ENCODE measurements at regions of chr18 and their contacts with region 1.

Region 1: DNA sequence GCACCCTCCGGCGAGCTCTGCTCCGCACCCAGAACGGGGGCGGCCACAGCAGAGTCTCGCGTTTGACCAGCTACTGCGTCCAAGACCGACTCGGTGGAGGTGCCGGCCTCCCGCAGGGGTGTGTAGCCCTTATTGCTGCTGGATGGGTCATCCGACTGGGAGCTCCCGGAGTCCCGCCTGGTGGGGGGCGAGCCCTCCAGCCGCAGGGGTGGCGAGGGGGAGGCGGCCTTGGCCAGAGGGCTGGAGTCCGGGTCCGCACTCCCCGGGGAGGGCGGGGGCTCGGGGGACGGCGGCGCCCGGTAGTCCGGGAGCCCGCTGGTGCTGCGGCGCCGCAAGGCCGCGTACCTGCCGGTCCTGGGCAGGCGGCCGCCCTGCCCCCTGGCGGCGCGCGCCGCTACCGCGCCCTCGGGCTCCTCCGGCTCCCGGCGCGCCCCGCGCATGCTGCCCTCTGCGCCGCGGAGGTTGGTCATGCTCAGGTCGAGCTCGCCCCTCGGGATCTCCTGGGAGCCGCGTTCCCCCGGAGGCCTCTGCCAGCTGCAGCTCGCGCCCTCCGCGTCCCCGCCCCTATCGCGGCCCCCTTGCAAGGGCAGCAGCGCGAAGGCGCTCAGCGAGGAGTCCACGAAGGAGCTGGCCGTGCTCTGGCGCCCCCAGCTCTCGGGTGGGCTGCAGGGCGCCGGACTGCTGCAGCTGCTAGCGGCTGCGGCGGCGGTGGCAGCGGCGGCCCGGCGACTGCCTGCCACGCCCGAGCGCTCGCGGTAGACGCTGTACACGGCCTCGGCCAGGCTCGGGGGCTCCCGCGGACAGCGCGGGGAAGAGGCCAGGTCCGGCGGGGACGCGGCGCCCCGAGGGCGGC is 4.8 kb downstream of the TMEM200C start:
- DNase-seq: peak; percentile 27 to 68 (median 40)
- ATAC-seq: peak; percentile 37 to 97 (median 80)
- H3K4me3 ChIP-seq: peak overlapping the region; percentile 32 to 70 (median 54)
- H3K27ac ChIP-seq: peak overlapping the region in 3 of 12 donors; percentile 19 to 71 (median 62)
- H3K4me1 ChIP-seq: peaks cover 0 to 31% (median 5%) of the 10 kb centered on the region in 12 donors
- H3K27me3 ChIP-seq: peaks cover 21 to 79% (median 42%) of the 10 kb centered on the region in 9 donors
- CTCF ChIP-seq: peak; percentile 19 to 90 (median 60)
- POLR2A ChIP-seq: no peak

Region 2: DNA sequence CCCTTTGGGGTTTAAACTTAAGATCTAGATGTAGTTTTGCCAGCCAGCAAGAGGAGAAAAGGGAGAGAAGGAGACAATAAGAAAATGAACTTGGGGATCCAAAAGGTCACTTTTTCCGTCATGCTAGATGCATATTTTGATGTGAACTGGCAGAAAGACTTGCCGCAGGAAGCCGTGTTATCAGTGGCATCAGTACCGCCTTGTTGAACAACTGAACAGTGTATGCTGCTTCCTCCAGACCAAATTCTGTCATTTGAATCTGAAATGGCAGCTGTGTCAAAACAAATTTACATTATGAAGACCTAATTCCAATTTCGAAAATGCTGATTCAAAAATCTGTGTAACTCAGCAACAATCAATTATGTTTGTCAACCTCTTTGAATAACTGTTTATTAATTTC is 37.3 kb before region 1 on chr18:
- intact Hi-C with region 1: no loop called
- DNase-seq: no peak
- ATAC-seq: no peak
- H3K4me3 ChIP-seq: no peak overlapping the region
- H3K27ac ChIP-seq: no peak overlapping the region
- H3K4me1 ChIP-seq: no peaks in the 10 kb centered on the region
- H3K27me3 ChIP-seq: peaks cover 0 to 49% (median 9%) of the 10 kb centered on the region in 9 donors
- CTCF ChIP-seq: no peak
- POLR2A ChIP-seq: no peak

Region 3: GRCh38 chr18:5969989-5970403 is 79.4 kb after region 1 on chr18:
- intact Hi-C with region 1: loop called in 1 of 10 experiments (anchors 10 kb)
- DNase-seq: no peak
- ATAC-seq: no peak
- H3K4me3 ChIP-seq: no peak overlapping the region
- H3K27ac ChIP-seq: no peak overlapping the region
- H3K4me1 ChIP-seq: peaks cover 0 to 6% (median 0%) of the 10 kb centered on the region in 12 donors
- H3K27me3 ChIP-seq: peaks cover 0 to 2% (median 0%) of the 10 kb centered on the region in 9 donors
- CTCF ChIP-seq: no peak
- POLR2A ChIP-seq: no peak

Region 4: DNA sequence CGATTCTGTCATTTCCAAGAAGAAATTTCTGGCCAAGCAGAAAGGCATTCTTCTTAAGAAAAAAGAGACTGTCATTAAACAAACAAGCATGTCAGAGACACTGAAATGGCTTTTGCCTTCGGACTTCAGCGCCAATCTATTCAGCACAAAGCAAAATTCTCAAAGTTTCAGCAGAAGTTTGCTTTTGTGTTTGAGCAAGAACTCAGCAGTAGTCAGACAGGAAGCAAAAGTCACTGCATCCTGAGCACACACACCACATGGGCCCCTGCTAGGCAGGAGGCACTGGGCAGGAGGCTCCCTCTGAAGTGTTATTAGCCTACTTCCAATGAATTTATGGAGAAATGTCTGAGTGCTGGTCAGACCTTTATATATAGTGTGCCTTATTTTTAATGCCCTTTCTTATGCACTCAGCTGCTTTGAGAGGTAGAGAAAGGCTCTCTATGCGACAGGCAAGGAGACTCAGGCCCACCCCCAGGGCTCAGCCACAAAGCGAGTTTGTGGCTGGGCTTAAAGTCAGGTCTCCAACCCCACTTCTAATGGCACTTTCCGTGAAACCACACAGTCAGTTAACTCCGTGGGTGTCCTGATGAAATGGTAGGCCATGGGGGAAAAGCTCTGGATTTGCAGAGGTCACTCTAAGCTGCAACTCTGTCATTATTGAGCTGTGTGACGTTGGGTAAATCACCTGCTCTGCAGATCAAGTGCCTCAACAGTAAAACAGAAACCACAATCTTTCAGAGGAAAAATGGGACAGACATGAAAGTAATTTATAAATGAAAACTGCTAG is 165.8 kb after region 1 on chr18:
- intact Hi-C with region 1: loop called in 1 of 10 experiments (anchors 10 kb)
- DNase-seq: no peak
- ATAC-seq: peak in 1 of 4 donors; percentile 20
- H3K4me3 ChIP-seq: no peak overlapping the region
- H3K27ac ChIP-seq: peak overlapping the region in 8 of 12 donors; percentile 19 to 67 (median 36)
- H3K4me1 ChIP-seq: peaks cover 0 to 43% (median 10%) of the 10 kb centered on the region in 12 donors
- H3K27me3 ChIP-seq: no peaks in the 10 kb centered on the region
- CTCF ChIP-seq: no peak
- POLR2A ChIP-seq: no peak

Region 5: DNA sequence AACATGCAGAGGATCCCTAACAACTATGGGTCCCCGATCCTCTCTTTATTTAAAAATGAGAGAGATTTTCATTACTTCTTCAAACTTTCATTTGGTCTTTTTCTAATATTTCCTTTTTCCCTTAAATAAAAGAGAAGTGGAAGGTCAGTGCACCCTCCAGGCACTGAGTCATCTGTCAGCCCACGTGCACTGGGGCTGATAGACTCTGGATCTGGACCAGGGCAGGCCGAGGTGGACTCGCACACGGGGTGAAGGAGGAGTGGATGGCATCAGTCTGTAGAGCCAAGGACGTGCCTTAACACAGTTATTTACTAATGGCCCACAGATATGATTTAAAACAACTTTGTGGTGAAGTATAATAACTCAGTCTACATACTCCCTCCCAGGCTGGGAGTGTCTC is 219.2 kb after region 1 on chr18:
- intact Hi-C with region 1: loop called in 1 of 10 experiments (anchors 10 kb)
- DNase-seq: no peak
- ATAC-seq: peak in 3 of 4 donors; percentile 66 to 80 (median 79)
- H3K4me3 ChIP-seq: no peak overlapping the region
- H3K27ac ChIP-seq: no peak overlapping the region
- H3K4me1 ChIP-seq: peaks cover 0 to 4% (median 0%) of the 10 kb centered on the region in 12 donors
- H3K27me3 ChIP-seq: no peaks in the 10 kb centered on the region
- CTCF ChIP-seq: no peak
- POLR2A ChIP-seq: no peak

Region 6: DNA sequence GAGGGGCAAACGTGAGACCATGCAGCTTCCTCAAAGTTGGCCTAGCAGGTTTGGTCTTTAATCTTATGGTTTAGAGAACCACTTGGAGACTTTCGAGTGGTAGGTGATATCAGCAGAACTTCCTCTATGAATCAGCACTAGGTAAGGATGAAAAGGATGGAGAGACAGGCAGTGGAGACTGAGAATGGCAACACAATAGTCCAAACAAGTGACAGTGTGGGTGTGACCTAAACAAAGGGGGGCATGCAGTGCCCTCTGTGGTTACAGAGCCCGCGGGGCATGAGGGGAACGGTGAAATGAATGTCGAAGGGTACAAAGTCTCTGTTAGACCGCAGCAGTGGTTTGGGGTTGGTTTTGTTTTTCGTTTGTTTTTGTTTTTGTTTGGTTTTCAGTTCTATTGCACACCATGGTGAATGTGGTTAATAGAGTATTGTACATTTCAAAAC is 380.2 kb after region 1 on chr18:
- intact Hi-C with region 1: no loop called
- DNase-seq: no peak
- ATAC-seq: no peak
- H3K4me3 ChIP-seq: no peak overlapping the region
- H3K27ac ChIP-seq: no peak overlapping the region
- H3K4me1 ChIP-seq: no peaks in the 10 kb centered on the region
- H3K27me3 ChIP-seq: peaks cover 0 to 6% (median 0%) of the 10 kb centered on the region in 9 donors
- CTCF ChIP-seq: no peak
- POLR2A ChIP-seq: no peak

Region 7: DNA sequence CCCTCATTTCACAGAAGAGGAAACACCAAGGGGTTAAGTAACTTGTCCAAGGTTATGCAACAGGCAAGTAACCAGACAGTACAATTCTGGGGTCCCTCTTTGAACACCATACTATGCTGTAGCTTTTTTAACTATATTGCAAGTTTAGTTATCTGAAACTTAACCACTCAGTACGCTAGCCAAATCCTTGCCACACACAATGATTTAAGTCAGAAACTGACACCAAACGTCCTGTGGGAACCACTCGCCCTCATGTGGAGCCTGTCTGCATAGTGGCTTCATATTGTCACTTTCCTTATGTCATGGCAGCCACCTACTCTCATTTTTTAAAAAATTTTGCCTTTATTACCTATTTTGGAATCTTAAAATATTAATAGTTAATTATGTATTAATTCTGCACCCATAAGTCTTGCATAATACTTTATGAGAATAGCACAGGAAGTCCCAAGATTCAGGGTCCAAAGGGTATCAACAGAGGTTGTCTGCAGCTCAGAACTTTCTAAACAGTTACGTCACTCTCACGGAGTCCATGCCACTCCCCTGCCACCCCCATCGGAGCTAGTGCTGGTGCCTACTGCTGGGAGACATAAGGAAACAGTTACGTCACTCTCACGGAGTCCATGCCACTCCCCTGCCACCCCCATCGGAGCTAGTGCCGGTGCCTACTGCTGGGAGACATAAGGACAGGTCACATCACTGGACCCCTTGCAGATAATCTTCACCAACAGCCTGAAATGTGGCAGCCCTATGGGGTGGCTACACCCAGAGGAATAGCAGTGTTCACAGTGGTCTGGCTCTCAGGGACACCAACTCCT is 425.2 kb after region 1 on chr18:
- intact Hi-C with region 1: loop called in 2 of 10 experiments (anchors 10 kb)
- DNase-seq: no peak
- ATAC-seq: peak in 1 of 4 donors; percentile 29
- H3K4me3 ChIP-seq: peak overlapping the region in 1 of 12 donors; percentile 13
- H3K27ac ChIP-seq: no peak overlapping the region
- H3K4me1 ChIP-seq: peaks cover 0 to 2% (median 0%) of the 10 kb centered on the region in 12 donors
- H3K27me3 ChIP-seq: no peaks in the 10 kb centered on the region
- CTCF ChIP-seq: peak in 2 of 12 donors; percentile 13 to 37
- POLR2A ChIP-seq: no peak

Region 8: DNA sequence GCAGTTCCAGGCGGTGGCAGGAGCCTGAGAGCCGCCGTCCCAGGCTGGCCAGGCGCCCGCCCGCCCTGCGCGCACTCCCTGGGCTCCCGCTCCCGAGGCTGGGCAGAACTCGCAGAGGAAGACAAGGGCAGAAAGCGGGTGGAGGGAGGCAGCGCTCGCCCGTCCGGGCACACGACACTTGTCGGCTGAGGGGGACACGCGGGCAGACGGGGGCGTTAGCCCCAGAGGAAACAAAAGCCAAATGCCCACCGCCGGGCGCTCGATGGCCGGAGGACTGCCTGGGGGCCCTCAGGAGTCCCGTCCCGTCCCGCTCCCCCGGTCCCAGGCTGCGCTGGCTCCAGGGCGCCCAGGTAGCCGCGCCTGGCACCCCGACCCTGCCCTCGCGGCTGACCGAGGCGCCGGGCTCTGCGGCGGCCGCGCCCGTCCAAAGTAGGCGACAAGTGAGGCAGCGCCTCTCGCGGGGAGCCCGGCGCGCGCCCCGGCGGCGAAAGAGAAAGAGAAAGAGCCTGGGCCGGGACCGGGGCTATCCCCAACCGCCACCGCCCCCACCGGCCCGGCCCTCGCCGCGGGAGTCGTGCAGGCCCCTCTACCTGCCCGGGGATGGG is 523.7 kb after region 1 on chr18:
- intact Hi-C with region 1: loop called in 1 of 10 experiments (anchors 5 kb)
- DNase-seq: peak; percentile 54 to 79 (median 71)
- ATAC-seq: peak in 3 of 4 donors; percentile 85 to 92 (median 89)
- H3K4me3 ChIP-seq: peak overlapping the region; percentile 58 to 94 (median 83)
- H3K27ac ChIP-seq: peak overlapping the region; percentile 52 to 87 (median 74)
- H3K4me1 ChIP-seq: peaks cover 0 to 22% (median 3%) of the 10 kb centered on the region in 12 donors
- H3K27me3 ChIP-seq: peaks cover 0 to 19% (median 6%) of the 10 kb centered on the region in 9 donors
- CTCF ChIP-seq: peak in 4 of 12 donors; percentile 17 to 38 (median 24)
- POLR2A ChIP-seq: no peak

Measured in heart left ventricle (tissue), 16 donors.